Left cardiac atrium (tissue), 4 donors: ENCODE measurements at regions of chr1 and their contacts with region 1.

Region 1: GRCh38 chr1:218361298-218362065 is 16.3 kb downstream of the TGFB2 start:
- DNase-seq: no peak
- ATAC-seq: peak in 1 of 2 donors; percentile 19

Region 2: GRCh38 chr1:218384581-218384993 is 23.1 kb after region 1 on chr1:
- intact Hi-C with region 1: no loop called
- DNase-seq: no peak
- ATAC-seq: peak; percentile 3 to 22

Region 3: DNA sequence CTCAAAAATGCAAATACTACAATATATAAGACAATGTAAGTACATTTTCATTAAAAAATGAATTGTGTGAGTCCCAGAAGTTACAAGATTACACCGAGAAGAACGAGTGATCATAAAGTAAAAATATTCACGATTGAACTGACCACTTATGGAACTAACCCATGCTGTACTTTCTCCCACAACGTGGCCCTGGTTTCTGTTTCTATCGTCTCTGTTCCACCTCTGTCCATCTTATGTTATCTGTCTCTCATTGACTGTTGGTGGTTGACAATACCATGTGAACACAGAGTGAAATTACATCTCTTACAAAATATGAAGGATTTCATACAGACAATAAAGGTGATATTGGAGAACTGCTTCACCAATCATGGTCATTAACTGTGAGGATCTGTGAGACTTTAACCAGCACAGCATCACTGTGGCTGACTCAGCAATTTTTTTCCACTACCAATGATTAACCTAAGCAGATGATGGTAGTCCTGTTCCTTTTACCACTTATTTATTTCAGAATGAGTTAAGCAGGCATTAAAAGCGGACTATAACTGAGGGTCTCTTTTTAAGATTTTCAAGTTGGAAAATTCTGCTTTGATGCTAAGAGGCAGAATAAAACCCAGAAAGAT is 148.8 kb after region 1 on chr1:
- intact Hi-C with region 1: loop called in 1 of 2 experiments (anchors 10 kb)
- DNase-seq: no peak
- ATAC-seq: no peak

Region 4: DNA sequence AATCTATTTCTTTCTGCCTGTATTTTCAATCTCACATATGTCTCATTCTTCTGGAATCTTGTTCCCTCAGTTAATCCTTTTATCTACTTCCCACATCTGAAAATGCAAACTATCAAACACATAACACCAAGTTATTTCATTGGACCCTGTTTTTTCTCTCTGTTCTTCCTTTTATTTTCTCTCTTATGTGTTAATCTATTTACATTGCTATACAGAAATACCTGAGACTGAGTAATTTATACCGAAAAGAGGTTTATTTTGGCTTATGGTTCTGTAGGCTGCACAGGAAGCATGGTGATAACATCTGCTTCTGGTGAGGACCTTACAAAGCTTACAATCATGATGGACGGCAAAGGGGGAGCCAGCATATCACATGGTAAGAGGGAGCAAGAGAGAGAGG is 231.2 kb after region 1 on chr1:
- intact Hi-C with region 1: no loop called
- DNase-seq: no peak
- ATAC-seq: no peak